Dorsolateral prefrontal cortex (tissue), 120 donors: ENCODE measurements at regions of chr14 and their contacts with region 1.

Region 1: DNA sequence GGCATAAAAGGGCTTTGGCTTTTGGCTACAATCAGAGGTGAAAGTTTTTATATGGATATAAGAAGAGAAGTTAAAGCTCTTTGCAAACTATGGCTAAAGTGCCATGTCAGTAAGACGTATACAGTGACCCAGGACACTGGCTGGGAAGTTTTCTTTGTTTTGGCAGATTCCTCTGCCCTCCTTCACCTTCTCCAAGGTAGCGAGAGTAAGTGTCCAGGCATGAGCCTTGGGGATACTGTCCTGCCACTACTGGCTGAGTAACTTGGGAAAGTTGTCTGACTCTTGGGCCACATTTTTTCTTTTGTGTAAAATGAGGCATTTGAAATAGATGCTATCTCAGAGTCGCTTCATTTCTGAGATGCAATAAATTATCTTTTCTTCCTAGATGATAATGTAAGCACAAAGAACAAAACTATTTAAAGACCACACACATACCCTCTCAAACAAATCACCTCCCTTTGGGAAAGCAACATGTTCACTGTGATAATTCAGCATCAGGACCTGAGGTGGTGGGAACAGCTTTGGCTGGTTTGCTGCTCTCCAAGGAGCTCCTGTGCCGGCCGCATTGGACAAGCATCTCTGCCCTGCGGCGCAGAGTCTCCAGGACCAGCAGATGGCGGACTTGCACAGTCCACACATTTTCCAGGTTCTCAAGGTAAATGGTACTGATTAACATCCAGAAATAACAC is 106.3 kb downstream of the PTCSC3 start:
- DNase-seq: peak; percentile 36 to 85 (median 75)
- H3K4me3 ChIP-seq: peak overlapping the region in 1 of 59 donors; percentile 15
- H3K27ac ChIP-seq: peak overlapping the region in 30 of 59 donors; percentile 1 to 72 (median 38)
- H3K27me3 ChIP-seq: no peaks in the 10 kb centered on the region
- CTCF ChIP-seq: peak in 55 of 56 donors; percentile 51 to 89 (median 75)

Region 2: DNA sequence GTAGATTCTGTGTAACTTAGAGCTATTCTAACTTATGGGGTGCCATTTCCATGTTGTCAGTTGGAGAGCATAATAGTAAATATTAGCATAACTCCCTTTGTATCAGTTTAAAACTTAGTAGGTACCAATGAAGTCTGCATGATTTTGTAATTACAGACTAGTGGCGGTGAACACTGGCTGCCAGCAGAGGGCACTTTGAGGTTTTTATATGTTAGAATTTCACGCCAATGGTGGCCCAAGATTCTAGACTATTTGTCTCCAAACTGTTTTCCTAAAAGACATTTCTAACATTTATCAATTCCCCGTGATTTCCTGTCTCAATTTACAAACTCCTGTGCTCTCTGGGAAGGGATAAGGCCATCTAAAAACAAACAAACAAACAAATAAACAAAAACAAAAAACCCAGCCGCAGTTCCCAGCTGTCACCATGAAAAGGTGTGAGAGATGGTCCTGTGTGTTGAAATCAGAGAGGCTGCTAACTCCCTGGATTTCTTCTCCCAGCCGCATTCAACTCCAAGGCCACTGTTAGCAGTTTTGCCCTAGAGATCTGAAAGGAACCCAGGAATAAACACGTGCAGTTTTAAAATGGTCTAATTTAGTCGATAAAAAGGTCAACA is 186.4 kb before region 1 on chr14:
- intact Hi-C with region 1: loop called (anchors 2 to 5 kb)
- DNase-seq: peak in 7 of 10 donors; percentile 12 to 73 (median 49)
- H3K4me3 ChIP-seq: no peak overlapping the region
- H3K27ac ChIP-seq: peak overlapping the region in 11 of 59 donors; percentile 21 to 69 (median 39)
- H3K27me3 ChIP-seq: no peaks in the 10 kb centered on the region
- CTCF ChIP-seq: peak; percentile 54 to 93 (median 78)

Region 3: DNA sequence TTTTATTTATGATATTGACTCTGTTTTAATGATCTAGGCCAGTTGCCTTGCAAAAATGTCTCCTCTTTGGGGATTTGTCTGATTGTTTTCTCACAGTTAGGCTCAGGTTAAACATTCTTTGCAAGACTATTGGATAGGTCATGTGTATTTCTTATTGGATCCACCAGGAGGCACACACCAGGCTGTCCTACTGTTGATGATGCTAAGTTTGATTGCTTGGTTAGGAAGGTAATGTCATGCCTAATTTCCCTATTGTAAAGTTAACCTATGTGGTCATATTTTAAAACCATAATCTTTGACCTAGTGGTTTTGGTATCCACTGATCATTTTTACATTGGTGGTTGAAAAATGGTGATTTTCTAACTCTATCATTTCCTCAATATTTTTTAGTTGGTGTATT is 107.0 kb before region 1 on chr14:
- intact Hi-C with region 1: loop called in 1 of 2 experiments (anchors 2 kb)
- DNase-seq: no peak
- H3K4me3 ChIP-seq: no peak overlapping the region
- H3K27ac ChIP-seq: peak overlapping the region in 8 of 59 donors; percentile 19 to 97 (median 92)
- H3K27me3 ChIP-seq: no peaks in the 10 kb centered on the region
- CTCF ChIP-seq: peak in 26 of 56 donors; percentile 7 to 51 (median 25)

Region 4: DNA sequence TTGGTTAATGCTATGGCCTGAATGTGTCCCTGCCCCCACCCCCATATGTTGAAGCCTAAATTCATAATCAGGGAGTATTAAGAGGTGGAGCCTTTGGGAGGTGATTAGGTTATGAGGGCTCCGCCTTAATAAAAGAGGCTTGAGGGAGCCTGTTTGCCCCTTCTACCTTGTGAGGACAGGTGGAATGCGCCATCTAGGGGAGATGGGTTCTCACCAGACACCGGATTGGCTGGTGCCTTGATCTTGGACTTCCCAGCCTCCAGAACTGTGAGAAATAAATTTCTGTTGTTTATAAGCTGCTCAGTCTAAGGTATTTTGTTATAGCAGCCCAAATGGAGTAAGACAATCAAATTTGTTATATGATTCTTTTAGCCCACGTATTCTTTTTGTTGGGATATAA is 42.0 kb before region 1 on chr14:
- intact Hi-C with region 1: loop called in 1 of 2 experiments (anchors 5 kb)
- DNase-seq: no peak
- H3K4me3 ChIP-seq: no peak overlapping the region
- H3K27ac ChIP-seq: no peak overlapping the region
- H3K27me3 ChIP-seq: no peaks in the 10 kb centered on the region
- CTCF ChIP-seq: no peak

Region 5: DNA sequence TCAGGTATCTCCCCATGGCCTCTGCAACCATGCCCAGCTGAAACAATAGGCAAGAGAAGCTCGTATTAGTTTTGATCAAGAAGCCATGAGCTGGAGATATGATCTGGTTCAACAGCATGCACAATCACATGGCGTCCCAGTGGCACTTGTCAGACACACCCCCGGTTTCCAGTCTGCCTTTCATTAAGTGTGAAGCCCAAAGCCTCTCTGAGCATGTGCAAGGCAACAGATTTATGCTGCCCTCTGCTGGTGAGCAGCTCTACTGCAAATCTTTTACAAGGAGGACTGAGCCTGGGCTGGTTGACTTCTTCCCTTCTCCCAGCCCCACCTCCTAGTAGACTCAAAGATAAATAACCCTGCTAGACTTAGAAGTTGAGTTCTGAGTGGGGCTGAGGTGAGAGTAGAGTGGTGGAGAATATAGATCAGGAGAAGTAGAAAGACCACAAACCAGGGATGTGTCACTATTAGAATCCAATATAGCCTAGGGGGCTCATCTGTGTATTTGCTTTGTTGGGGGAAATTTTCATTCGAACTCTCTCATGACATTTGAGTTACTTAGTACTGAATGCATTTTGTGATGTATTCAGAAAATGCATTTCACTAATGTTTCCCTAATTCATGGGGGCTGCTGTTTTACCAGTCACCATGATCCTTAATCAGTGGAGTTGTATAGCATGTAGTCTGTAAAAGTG is 304.0 kb after region 1 on chr14:
- intact Hi-C with region 1: loop called (anchors 1 kb)
- DNase-seq: peak; percentile 21 to 82 (median 60)
- H3K4me3 ChIP-seq: no peak overlapping the region
- H3K27ac ChIP-seq: no peak overlapping the region
- H3K27me3 ChIP-seq: peaks cover 0 to 7% (median 0%) of the 10 kb centered on the region in 45 donors
- CTCF ChIP-seq: peak; percentile 57 to 95 (median 85)

Region 6: GRCh38 chr14:36604757-36605505 is 534.8 kb after region 1 on chr14:
- intact Hi-C with region 1: loop called in 1 of 2 experiments (anchors 10 kb)
- DNase-seq: peak in 4 of 10 donors; percentile 14 to 62 (median 36)
- H3K4me3 ChIP-seq: no peak overlapping the region
- H3K27ac ChIP-seq: no peak overlapping the region
- H3K27me3 ChIP-seq: peaks cover 0 to 52% (median 9%) of the 10 kb centered on the region in 45 donors
- CTCF ChIP-seq: peak; percentile 60 to 87 (median 78)